Activated B cell treated with CpG ODN at 0.5 μM for 24 hours (primary cell): ENCODE measurements at regions of chr3 and their contacts with region 1.

Region 1: DNA sequence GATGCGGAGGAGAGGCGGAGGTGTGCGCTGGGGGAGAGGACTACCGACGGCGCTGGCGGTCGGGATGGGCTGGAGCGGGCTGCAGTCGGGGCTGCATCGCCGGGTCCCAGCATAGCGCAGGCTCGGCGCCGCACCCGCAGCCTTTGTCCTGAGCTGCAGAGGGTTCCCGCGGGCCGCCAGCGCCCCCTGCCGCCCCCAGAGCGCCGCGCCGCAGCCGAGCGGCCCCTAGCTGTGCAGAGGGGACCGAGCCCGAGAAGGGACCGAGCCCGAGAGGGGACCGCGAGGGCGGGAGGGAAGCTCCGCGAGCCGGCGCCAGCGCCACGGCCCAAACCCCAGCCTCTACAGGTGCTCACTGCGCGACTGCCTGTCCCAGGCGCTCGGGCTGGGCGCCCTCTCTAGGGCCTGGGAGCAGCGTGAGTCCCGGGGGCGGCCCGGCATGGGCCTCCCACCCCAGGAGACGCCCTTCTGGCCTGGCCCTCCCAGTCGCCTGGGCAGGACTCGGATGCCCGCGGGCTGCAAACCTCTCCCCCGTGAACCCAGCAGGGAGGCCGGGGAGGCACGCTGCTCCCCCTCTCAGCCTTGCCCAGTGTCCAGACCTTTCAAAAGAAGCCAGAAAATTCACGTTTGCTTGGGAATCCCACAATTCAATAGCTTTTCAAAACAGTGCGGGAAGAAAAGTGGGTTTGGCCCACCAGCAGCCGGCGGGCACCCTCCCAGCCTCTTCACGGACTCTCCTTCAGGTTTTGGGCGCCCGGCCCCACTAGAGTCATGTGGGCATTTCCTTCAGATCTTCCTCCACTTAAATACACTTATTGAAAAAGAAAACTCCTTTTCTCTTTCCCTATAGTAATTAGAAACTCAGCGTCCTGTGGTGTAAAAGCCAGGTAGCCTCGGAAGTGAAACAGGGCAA is 134.7 kb downstream of the TPRA1 start:
- DNase-seq: peak; percentile 49
- ATAC-seq: peak; percentile 80
- H3K4me3 Mint-ChIP-seq: no peak overlapping the region
- H3K27ac Mint-ChIP-seq: no peak overlapping the region
- H3K4me1 Mint-ChIP-seq: peaks cover 4% of the 10 kb centered on the region
- H3K27me3 Mint-ChIP-seq: peaks cover 52% of the 10 kb centered on the region
- CTCF ChIP-seq: no peak

Region 2: GRCh38 chr3:126134219-126134975 is 1321.4 kb before region 1 on chr3:
- CTCF ChIA-PET with region 1: no interaction called
- POLR2A ChIA-PET with region 1: no interaction called
- intact Hi-C with region 1: loop called (anchors 5 kb)
- DNase-seq: peak; percentile 26
- ATAC-seq: peak; percentile 58
- H3K4me3 Mint-ChIP-seq: no peak overlapping the region
- H3K27ac Mint-ChIP-seq: no peak overlapping the region
- H3K4me1 Mint-ChIP-seq: no peaks in the 10 kb centered on the region
- H3K27me3 Mint-ChIP-seq: peaks cover 18% of the 10 kb centered on the region
- CTCF ChIP-seq: peak; percentile 64

Region 3: GRCh38 chr3:126522363-126522788 is 933.4 kb before region 1 on chr3:
- CTCF ChIA-PET with region 1: interaction called, 8 read pairs
- POLR2A ChIA-PET with region 1: no interaction called
- intact Hi-C with region 1: loop called (anchors 1 kb)
- DNase-seq: peak; percentile 37
- ATAC-seq: no peak
- H3K4me3 Mint-ChIP-seq: no peak overlapping the region
- H3K27ac Mint-ChIP-seq: no peak overlapping the region
- H3K4me1 Mint-ChIP-seq: no peaks in the 10 kb centered on the region
- H3K27me3 Mint-ChIP-seq: peaks cover 24% of the 10 kb centered on the region
- CTCF ChIP-seq: peak; percentile 81

Region 4: DNA sequence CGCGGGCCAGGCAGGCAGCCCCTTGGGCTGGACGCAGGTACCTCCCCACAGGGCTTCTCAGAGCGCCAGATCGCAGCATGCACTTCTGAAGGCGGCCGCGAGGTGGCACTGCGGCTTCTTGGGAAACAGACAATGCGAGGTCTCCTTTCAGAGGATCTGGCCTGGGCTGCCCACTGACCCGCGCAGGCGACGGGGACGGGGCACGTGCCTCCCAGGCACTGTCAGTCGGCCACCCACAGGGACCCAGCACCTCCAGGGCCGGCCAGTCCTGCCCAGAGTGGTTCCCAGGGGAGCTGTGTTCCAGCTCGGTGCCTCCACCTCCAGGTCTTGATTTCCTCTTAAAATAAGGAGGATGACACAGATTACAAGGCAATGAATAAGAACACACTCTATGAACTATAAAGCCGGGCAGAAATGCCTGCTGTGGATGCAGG is 776.5 kb before region 1 on chr3:
- CTCF ChIA-PET with region 1: interaction called, 8 read pairs
- POLR2A ChIA-PET with region 1: no interaction called
- intact Hi-C with region 1: loop called (anchors 1 kb)
- DNase-seq: peak; percentile 78
- ATAC-seq: peak; percentile 86
- H3K4me3 Mint-ChIP-seq: peak overlapping the region; percentile 67
- H3K27ac Mint-ChIP-seq: no peak overlapping the region
- H3K4me1 Mint-ChIP-seq: peaks cover 25% of the 10 kb centered on the region
- H3K27me3 Mint-ChIP-seq: peaks cover 5% of the 10 kb centered on the region
- CTCF ChIP-seq: peak; percentile 86

Region 5: GRCh38 chr3:127525373-127525772 is 69.6 kb after region 1 on chr3:
- CTCF ChIA-PET with region 1: no interaction called
- POLR2A ChIA-PET with region 1: no interaction called
- intact Hi-C with region 1: no loop called
- DNase-seq: no peak
- ATAC-seq: no peak
- H3K4me3 Mint-ChIP-seq: no peak overlapping the region
- H3K27ac Mint-ChIP-seq: no peak overlapping the region
- H3K4me1 Mint-ChIP-seq: no peaks in the 10 kb centered on the region
- H3K27me3 Mint-ChIP-seq: peaks cover 17% of the 10 kb centered on the region
- CTCF ChIP-seq: no peak

Region 6: GRCh38 chr3:127628788-127629466 is 173.1 kb after region 1 on chr3 and contains the start of gene PODXL2:
- CTCF ChIA-PET with region 1: no interaction called
- POLR2A ChIA-PET with region 1: no interaction called
- intact Hi-C with region 1: no loop called
- DNase-seq: peak; percentile 39
- ATAC-seq: peak; percentile 68
- H3K4me3 Mint-ChIP-seq: peak within 1 kb of the TSS; percentile 84
- H3K27ac Mint-ChIP-seq: peak within 1 kb of the TSS; percentile 20
- H3K4me1 Mint-ChIP-seq: peaks cover 21% of the 10 kb centered on the region
- H3K27me3 Mint-ChIP-seq: peaks cover 11% of the 10 kb centered on the region
- CTCF ChIP-seq: no peak
- total RNA-seq, gene PODXL2: 3.3 and 3.7 TPM in 2 replicates